Activated CD4-positive, alpha-beta T cell treated with anti-CD3 and anti-CD28 coated beads for 36 hours (primary cell): ENCODE measurements at regions of chr9 and their contacts with region 1.

Region 1: DNA sequence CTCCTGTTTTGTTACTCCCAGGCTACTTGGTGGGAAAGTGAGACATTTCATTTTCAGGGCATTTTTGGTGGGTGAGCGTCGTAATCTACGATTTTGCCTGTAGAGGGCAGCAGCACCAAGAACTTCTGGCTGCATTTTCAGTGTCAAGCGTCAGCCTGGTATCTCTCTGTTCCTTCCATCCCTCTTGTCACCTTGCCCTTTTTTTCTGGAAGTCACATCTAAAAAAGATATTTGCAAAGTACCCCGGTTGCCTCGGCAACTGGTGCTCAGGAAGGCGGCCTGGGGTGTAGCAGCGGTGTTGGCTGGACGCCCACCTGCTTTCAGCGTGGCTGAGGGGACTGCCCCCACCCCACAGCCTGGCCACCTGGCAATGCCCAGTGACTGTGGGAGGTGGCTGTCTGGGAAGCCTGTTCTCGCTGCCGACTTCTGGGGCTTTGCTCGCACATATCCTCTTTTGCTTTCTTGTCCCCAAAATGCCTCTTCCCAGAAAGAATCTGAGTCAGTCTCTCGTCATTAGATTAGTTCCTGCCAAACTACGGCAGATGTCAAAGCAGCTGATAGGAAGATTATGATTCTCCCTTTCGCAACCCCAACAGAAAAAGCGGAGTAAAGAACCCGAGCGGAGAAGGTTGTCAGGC is 84.5 kb downstream of the ACER2 start:
- DNase-seq: peak; percentile 63
- ATAC-seq: peak; percentile 68
- H3K4me3 Mint-ChIP-seq: peak overlapping the region; percentile 27
- H3K27ac Mint-ChIP-seq: peak overlapping the region; percentile 40
- H3K4me1 Mint-ChIP-seq: peaks cover 15% of the 10 kb centered on the region
- H3K27me3 Mint-ChIP-seq: peaks cover 2% of the 10 kb centered on the region

Region 2: DNA sequence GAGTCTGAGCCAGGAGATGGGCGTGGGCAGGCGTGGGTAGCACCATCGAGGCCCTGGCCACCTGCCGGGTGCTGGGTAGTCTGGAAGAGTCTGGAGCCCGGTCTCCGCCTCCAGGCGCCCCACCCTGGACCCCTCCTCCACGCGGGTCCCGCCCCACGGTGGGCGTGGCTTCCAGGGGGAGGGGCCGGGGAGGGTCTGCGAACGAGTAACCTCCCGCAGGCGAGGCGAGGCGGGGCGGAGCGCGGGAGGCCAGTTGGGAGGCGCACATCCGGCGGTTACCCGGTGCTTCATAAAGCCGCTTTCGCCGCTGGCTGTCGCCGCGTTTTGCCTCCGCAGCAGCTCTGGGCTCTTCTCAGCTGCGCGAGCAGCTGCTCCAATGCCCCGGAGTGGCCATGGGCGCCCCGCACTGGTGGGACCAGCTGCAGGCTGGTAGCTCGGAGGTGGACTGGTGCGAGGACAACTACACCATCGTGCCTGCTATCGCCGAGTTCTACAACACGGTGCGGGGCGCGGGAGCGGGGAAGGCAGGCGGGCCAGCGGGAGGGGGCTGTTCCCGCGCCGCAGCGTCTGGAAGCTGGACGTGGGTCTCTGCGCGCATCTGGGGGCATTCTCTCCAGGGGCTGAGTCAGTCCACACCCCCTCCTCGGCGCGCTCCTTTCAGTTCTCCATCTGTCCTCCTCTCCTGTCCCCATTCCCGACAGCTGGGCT is 84.4 kb before region 1 on chr9 and contains the start of gene ACER2:
- CTCF ChIA-PET with region 1: no interaction called
- POLR2A ChIA-PET with region 1: no interaction called
- intact Hi-C with region 1: no loop called
- DNase-seq: peak; percentile 96
- ATAC-seq: peak; percentile 96
- H3K4me3 Mint-ChIP-seq: peak within 1 kb of the TSS; percentile 89
- H3K27ac Mint-ChIP-seq: peak within 1 kb of the TSS; percentile 68
- H3K4me1 Mint-ChIP-seq: peaks cover 6% of the 10 kb centered on the region
- H3K27me3 Mint-ChIP-seq: no peaks in the 10 kb centered on the region
- total RNA-seq, gene ACER2: 1.5 to 1.6 TPM

Region 3: DNA sequence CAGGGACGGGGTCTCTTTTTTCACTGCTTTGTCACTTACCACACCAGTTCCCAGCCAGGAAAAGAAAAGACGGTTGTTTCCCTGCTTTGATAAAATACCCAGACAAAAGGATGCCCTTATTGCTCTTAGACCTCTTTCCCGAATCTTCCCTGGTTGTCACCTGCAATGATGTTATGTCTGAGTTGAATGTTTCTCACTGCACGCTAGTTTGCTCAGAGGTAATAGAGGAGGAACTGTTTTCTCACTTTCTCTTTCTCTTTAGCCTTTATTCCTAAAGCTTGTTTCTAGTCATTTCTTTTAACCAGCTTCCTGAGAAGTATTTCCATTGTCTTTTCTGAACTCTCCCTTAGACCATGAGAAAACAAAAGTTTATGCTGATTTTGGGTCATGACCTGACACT is 51.6 kb before region 1 on chr9:
- CTCF ChIA-PET with region 1: no interaction called
- POLR2A ChIA-PET with region 1: no interaction called
- intact Hi-C with region 1: no loop called
- DNase-seq: no peak
- ATAC-seq: peak; percentile 90
- H3K4me3 Mint-ChIP-seq: peak overlapping the region; percentile 52
- H3K27ac Mint-ChIP-seq: peak overlapping the region; percentile 78
- H3K4me1 Mint-ChIP-seq: peaks cover 14% of the 10 kb centered on the region
- H3K27me3 Mint-ChIP-seq: no peaks in the 10 kb centered on the region

Region 4: GRCh38 chr9:19464764-19465585 is 28.3 kb before region 1 on chr9:
- CTCF ChIA-PET with region 1: interaction called, 12 read pairs
- POLR2A ChIA-PET with region 1: no interaction called
- intact Hi-C with region 1: no loop called
- DNase-seq: peak; percentile 83
- ATAC-seq: peak; percentile 89
- H3K4me3 Mint-ChIP-seq: peak overlapping the region; percentile 77
- H3K27ac Mint-ChIP-seq: peak overlapping the region; percentile 71
- H3K4me1 Mint-ChIP-seq: peaks cover 7% of the 10 kb centered on the region
- H3K27me3 Mint-ChIP-seq: no peaks in the 10 kb centered on the region

Region 5: GRCh38 chr9:19517202-19517942 is 24.1 kb after region 1 on chr9:
- CTCF ChIA-PET with region 1: interaction called, 3 read pairs
- POLR2A ChIA-PET with region 1: no interaction called
- intact Hi-C with region 1: loop called in 1 of 2 experiments (anchors 2 kb)
- DNase-seq: peak; percentile 31
- ATAC-seq: peak; percentile 51
- H3K4me3 Mint-ChIP-seq: no peak overlapping the region
- H3K27ac Mint-ChIP-seq: no peak overlapping the region
- H3K4me1 Mint-ChIP-seq: peaks cover 23% of the 10 kb centered on the region
- H3K27me3 Mint-ChIP-seq: peaks cover 8% of the 10 kb centered on the region

Region 6: GRCh38 chr9:19641046-19641445 is 147.8 kb after region 1 on chr9:
- CTCF ChIA-PET with region 1: interaction called, 5 read pairs
- POLR2A ChIA-PET with region 1: no interaction called
- intact Hi-C with region 1: loop called (anchors 5 kb)
- DNase-seq: no peak
- ATAC-seq: no peak
- H3K4me3 Mint-ChIP-seq: no peak overlapping the region
- H3K27ac Mint-ChIP-seq: no peak overlapping the region
- H3K4me1 Mint-ChIP-seq: no peaks in the 10 kb centered on the region
- H3K27me3 Mint-ChIP-seq: no peaks in the 10 kb centered on the region

Region 7: DNA sequence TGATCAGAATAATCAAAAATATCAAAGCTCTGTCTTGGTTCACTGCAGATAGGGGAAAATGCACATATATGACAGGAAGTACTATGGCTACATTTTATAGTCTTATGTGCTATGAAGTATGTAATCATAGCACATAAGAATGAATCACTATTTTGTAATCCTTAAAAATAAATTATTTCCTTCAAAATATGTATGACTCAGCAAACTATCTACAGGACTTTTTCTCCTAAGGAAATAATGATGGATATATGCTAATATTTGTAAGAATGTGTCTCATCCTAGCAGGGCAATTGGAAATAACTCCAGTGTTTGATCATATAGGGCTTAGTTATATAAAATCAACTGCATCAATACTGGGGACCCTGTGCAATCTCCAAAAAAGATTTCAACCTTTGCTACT is 210.4 kb after region 1 on chr9:
- CTCF ChIA-PET with region 1: no interaction called
- POLR2A ChIA-PET with region 1: no interaction called
- intact Hi-C with region 1: no loop called
- DNase-seq: no peak
- ATAC-seq: no peak
- H3K4me3 Mint-ChIP-seq: no peak overlapping the region
- H3K27ac Mint-ChIP-seq: no peak overlapping the region
- H3K4me1 Mint-ChIP-seq: no peaks in the 10 kb centered on the region
- H3K27me3 Mint-ChIP-seq: peaks cover 5% of the 10 kb centered on the region

Region 8: GRCh38 chr9:19754921-19755320 is 261.6 kb after region 1 on chr9:
- CTCF ChIA-PET with region 1: no interaction called
- POLR2A ChIA-PET with region 1: no interaction called
- intact Hi-C with region 1: loop called in 1 of 2 experiments (anchors 10 kb)
- DNase-seq: no peak
- ATAC-seq: no peak
- H3K4me3 Mint-ChIP-seq: no peak overlapping the region
- H3K27ac Mint-ChIP-seq: no peak overlapping the region
- H3K4me1 Mint-ChIP-seq: no peaks in the 10 kb centered on the region
- H3K27me3 Mint-ChIP-seq: peaks cover 4% of the 10 kb centered on the region

Region 9: DNA sequence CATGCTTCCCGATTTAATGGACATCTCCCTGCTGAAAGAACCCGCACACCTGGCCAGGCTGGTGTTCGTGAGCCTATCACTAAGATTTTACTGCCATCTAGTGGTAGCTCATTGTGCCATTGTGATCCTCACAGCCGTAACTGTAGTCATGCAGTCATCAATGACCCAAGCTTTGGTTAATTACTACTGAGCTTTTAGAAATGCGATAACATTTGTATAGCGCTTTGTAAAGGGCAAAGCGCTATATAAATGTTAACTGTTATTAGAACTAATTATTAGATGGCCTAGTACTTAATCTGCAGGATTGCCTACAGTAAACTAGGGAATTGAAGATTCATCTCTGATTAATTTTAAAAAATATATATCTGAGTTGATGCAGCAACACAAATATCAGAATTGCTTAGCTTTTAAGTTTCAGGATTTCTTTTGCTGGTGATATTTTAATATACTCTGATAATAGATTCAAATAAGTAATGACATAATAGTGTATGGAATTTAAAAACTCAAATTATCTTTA is 1447.9 kb after region 1 on chr9:
- CTCF ChIA-PET with region 1: no interaction called
- POLR2A ChIA-PET with region 1: no interaction called
- intact Hi-C with region 1: loop called in 1 of 2 experiments (anchors 5 kb)
- DNase-seq: peak; percentile 68
- ATAC-seq: peak; percentile 98
- H3K4me3 Mint-ChIP-seq: no peak overlapping the region
- H3K27ac Mint-ChIP-seq: no peak overlapping the region
- H3K4me1 Mint-ChIP-seq: peaks cover 3% of the 10 kb centered on the region
- H3K27me3 Mint-ChIP-seq: no peaks in the 10 kb centered on the region